ENCODE measurements at regions of chr9 and their contacts with region 1.

Region 1: GRCh38 chr9:116800885-116801284 is 113.8 kb downstream of the TRIM32 start:
- DNase-seq: no peak
- ATAC-seq: peak; percentile 91
- H3K4me3 Mint-ChIP-seq: no peak overlapping the region
- H3K27ac Mint-ChIP-seq: peak overlapping the region; percentile 3; the same call in 1 of the 2 replicates
- H3K4me1 Mint-ChIP-seq: peaks cover 22% of the 10 kb centered on the region
- H3K27me3 Mint-ChIP-seq: no peaks in the 10 kb centered on the region
- CTCF ChIP-seq: no peak

Region 2: GRCh38 chr9:116661037-116661954 is 139.6 kb before region 1 on chr9:
- CTCF ChIA-PET with region 1: no interaction called
- POLR2A ChIA-PET with region 1: no interaction called
- DNase-seq: no peak
- ATAC-seq: peak; percentile 91
- H3K4me3 Mint-ChIP-seq: no peak overlapping the region
- H3K27ac Mint-ChIP-seq: no peak overlapping the region
- H3K4me1 Mint-ChIP-seq: peaks cover 6% of the 10 kb centered on the region; the same call in 1 of the 2 replicates
- H3K27me3 Mint-ChIP-seq: no peaks in the 10 kb centered on the region
- CTCF ChIP-seq: peak; percentile 61

Region 3: GRCh38 chr9:116842658-116843057 is 41.8 kb after region 1 on chr9:
- CTCF ChIA-PET with region 1: interaction called, 10 read pairs
- POLR2A ChIA-PET with region 1: no interaction called
- DNase-seq: peak; percentile 77
- ATAC-seq: peak; percentile 96
- H3K4me3 Mint-ChIP-seq: no peak overlapping the region
- H3K27ac Mint-ChIP-seq: no peak overlapping the region
- H3K4me1 Mint-ChIP-seq: peaks cover 38% of the 10 kb centered on the region
- H3K27me3 Mint-ChIP-seq: no peaks in the 10 kb centered on the region; the same call in 1 of the 2 replicates
- CTCF ChIP-seq: no peak